ENCODE measurements at regions of chr5 and their contacts with region 1.

Region 1: GRCh38 chr5:171418316-171418981 is 998 bp upstream of the FGF18 start:
- DNase-seq: peak; percentile 89
- H3K4me3 ChIP-seq: peak overlapping the region in 3 of 4 donors; percentile 29 to 49 (median 45)
- H3K27ac ChIP-seq: peak overlapping the region in 1 of 4 donors; percentile 37
- H3K4me1 ChIP-seq: peaks cover 0 to 33% (median 31%) of the 10 kb centered on the region in 4 donors
- H3K27me3 ChIP-seq: no peaks in the 10 kb centered on the region
- CTCF ChIP-seq: peak; percentile 76 to 94 (median 92)
- EP300 ChIP-seq: no peak
- POLR2A ChIP-seq: no peak

Region 2: GRCh38 chr5:171055875-171056454 is 362.5 kb before region 1 on chr5:
- intact Hi-C with region 1: no loop called
- DNase-seq: no peak
- H3K4me3 ChIP-seq: no peak overlapping the region
- H3K27ac ChIP-seq: no peak overlapping the region
- H3K4me1 ChIP-seq: no peaks in the 10 kb centered on the region
- H3K27me3 ChIP-seq: no peaks in the 10 kb centered on the region
- CTCF ChIP-seq: no peak
- EP300 ChIP-seq: no peak
- POLR2A ChIP-seq: no peak

Region 3: DNA sequence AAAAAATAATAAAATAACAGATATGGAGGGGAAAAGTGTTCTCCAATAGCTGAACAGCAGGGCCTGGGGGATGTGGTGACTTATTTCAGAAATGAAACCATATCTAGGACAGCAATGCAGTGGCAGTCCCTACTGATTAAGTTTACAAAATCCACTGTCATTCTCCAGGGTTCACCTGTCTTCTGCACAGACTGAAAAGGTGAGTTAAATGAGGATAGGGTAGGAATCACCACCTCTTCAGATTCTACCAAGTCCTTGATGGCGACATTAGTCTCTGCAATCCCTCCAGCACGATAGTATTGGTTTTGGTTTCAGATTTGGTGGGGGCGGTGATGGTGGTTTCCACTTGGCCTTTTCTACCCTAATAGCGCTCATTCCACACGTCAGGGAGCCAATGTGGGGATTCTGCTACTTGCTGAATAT is 63.1 kb before region 1 on chr5:
- intact Hi-C with region 1: no loop called
- DNase-seq: no peak
- H3K4me3 ChIP-seq: no peak overlapping the region
- H3K27ac ChIP-seq: no peak overlapping the region
- H3K4me1 ChIP-seq: no peaks in the 10 kb centered on the region
- H3K27me3 ChIP-seq: peaks cover 0 to 3% (median 0%) of the 10 kb centered on the region in 3 donors
- CTCF ChIP-seq: no peak
- EP300 ChIP-seq: no peak
- POLR2A ChIP-seq: no peak

Region 4: DNA sequence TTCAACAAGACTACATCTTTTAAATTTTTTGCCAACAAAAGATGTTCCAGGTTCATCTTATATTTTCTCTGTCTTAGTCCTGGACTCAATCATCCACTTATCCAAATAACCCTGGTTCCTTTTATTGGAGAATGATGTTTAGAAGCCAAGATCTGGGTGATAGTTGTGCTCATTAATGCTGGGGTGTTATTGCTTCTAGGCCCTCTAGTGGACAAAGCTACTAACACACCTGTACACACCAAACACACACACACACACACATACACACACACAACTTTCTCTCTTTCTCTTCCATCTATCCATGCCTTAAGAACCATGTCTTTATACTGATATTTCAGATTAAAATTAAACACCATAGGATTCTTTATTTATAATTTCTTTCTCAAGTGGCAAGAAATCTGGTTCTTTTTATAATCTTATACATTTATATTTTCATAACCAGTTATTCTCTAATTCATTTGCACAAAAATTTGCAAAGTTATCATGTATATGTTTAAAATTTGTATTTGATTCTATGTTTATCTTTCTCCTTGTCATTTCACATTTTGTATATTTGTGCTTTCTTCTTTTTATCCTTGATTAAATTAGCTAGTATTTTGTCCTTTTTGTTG is 188.1 kb after region 1 on chr5:
- intact Hi-C with region 1: loop called (anchors 10 kb)
- DNase-seq: no peak
- H3K4me3 ChIP-seq: no peak overlapping the region
- H3K27ac ChIP-seq: no peak overlapping the region
- H3K4me1 ChIP-seq: no peaks in the 10 kb centered on the region
- H3K27me3 ChIP-seq: no peaks in the 10 kb centered on the region
- CTCF ChIP-seq: no peak
- EP300 ChIP-seq: no peak
- POLR2A ChIP-seq: no peak

Region 5: DNA sequence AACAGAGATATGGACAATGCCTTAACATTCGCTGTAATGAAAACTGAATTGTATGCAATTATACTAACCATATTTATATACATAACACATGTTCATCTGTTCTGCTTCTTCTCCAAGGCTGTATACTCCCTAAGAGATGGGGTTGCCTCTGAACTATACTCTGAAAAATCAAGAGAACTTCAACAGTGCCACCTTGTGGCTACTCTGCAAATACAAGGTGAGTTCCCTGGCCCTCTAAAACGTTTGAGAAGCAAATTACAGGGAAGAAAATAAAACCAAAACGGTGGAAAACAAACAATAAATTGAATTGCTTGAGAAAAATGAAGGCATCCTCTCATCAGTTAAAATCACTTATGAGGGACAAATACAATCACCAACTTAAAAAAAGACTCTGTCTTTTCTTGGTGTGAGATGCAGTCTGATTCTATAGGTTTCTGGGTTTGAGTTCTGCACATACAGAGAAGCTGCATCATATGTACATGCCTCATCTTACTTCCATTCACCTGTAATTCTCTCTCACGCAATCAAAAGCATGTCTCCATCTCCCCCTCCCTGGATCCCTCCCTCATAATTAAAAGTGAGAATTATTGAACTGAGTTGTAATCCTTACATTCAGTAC is 489.4 kb after region 1 on chr5:
- intact Hi-C with region 1: loop called (anchors 2 kb)
- DNase-seq: no peak
- H3K4me3 ChIP-seq: no peak overlapping the region
- H3K27ac ChIP-seq: no peak overlapping the region
- H3K4me1 ChIP-seq: peaks cover 0 to 11% (median 10%) of the 10 kb centered on the region in 4 donors
- H3K27me3 ChIP-seq: no peaks in the 10 kb centered on the region
- CTCF ChIP-seq: peak; percentile 26 to 76 (median 64)
- EP300 ChIP-seq: no peak
- POLR2A ChIP-seq: no peak

Region 6: DNA sequence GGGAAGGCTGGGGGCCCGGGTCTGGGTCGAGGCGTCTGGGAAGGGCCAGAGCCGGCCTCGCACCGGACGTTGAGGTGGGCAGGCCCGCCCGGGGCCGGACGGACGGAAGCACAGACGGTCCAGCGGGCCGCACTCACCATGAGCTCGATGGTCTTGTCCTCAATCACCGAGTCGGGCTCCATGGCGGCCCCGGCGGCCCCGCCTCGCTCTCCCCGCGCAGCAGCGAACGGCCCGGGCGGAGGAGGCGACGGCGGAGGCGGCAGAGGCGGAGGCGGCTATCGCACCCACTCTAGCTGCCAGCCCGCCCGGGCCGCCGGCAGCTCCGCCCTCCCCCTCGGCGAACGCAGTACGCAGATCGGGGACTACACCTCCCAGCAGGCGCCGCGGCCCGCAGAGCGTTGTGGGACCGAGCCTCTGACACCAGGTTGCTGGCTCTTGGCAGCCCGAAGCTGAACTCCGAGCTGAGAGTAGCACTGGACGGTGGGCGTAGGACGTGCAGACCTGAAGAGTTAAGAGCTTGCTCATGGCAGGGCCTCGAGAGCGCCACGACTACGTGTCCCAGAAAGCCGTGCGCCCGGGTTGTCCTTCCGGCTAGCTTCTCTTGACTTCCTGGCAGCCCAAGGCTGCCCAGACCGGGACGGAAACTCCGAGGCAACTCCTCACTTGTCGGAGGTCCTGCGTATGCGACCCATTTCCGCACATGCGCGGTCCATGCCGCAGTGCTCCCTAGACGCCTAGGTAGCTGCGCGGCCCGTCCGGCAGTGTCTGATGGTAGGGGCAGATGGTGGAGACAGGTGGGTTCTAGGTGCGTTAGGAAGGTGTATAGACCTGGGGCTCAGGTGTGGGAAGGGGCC is 588.1 kb after region 1 on chr5 and contains the start of gene FBXW11:
- intact Hi-C with region 1: loop called (anchors 10 kb)
- DNase-seq: peak; percentile 99
- H3K4me3 ChIP-seq: peak within 1 kb of the TSS; percentile 79 to 99 (median 96)
- H3K27ac ChIP-seq: peak within 1 kb of the TSS; percentile 92 to 99 (median 98)
- H3K4me1 ChIP-seq: peaks cover 0 to 46% (median 40%) of the 10 kb centered on the region in 4 donors
- H3K27me3 ChIP-seq: no peaks in the 10 kb centered on the region
- CTCF ChIP-seq: no peak
- EP300 ChIP-seq: no peak
- POLR2A ChIP-seq: peak; percentile 77 to 79
- total RNA-seq, gene FBXW11: 42.9 to 67.1 (median 49.4) TPM

Region 7: GRCh38 chr5:172044631-172045314 is 626.3 kb after region 1 on chr5:
- intact Hi-C with region 1: loop called (anchors 10 kb)
- DNase-seq: no peak
- H3K4me3 ChIP-seq: no peak overlapping the region
- H3K27ac ChIP-seq: no peak overlapping the region
- H3K4me1 ChIP-seq: no peaks in the 10 kb centered on the region
- H3K27me3 ChIP-seq: no peaks in the 10 kb centered on the region
- CTCF ChIP-seq: no peak
- EP300 ChIP-seq: no peak
- POLR2A ChIP-seq: no peak